AG04449 (cell line): ENCODE measurements at regions of chr16 and their contacts with region 1.

Region 1: GRCh38 chr16:3501783-3502420 is 1.1 kb downstream of the CLUAP1 start:
- DNase-seq: no peak
- H3K4me3 ChIP-seq: peak overlapping the region; percentile 89
- CTCF ChIP-seq: no peak

Region 2: GRCh38 chr16:3487521-3488378 is 14.2 kb before region 1 on chr16:
- CTCF ChIA-PET with region 1: interaction called, 10 read pairs
- POLR2A ChIA-PET with region 1: no interaction called
- DNase-seq: no peak
- H3K4me3 ChIP-seq: no peak overlapping the region
- CTCF ChIP-seq: no peak

Region 3: GRCh38 chr16:3514621-3515020 is 12.7 kb after region 1 on chr16:
- CTCF ChIA-PET with region 1: interaction called, 14 read pairs
- POLR2A ChIA-PET with region 1: no interaction called
- DNase-seq: peak; percentile 29
- H3K4me3 ChIP-seq: no peak overlapping the region
- CTCF ChIP-seq: no peak

Region 4: DNA sequence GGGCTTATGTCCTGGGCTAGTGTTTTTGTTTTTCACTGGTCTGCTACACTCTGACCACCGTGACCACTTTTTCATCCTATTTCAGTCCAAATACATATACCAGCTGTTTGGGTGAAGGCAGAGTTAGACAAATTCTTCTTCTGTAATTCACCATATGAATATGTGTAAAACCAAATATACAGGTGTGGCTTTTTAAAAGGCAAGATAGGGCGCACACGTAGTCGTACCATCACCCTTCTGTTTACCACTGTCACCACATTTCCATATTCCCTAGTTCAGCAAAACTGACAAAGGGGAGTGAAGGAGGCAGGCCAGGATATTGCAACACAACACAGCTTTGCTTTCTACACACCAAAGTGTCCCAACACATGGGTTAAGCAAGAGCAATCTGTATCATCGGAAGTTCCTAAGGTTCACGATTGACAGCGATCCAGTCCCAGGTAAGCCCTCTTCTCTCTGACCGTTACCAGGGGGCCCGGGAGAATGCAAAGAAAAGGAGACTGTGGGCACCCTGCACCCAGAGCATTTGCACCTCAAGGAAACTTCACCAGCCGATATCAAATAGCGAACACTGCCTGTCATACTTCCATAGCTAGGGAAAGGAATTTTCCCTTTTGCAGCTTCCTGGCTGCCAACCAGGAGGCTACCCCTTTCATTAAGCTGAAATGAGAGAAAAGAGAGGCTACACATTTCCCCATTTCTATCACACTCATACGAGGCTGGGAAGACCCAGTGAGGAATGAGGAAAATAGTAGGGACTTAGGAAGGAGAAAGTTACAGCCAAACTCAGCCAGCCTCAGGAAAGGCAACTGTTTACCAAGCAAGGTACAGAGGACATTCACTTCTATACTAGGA is 355.5 kb after region 1 on chr16:
- CTCF ChIA-PET with region 1: no interaction called
- POLR2A ChIA-PET with region 1: no interaction called
- DNase-seq: no peak
- H3K4me3 ChIP-seq: no peak overlapping the region
- CTCF ChIP-seq: no peak